AG04450 (cell line): ENCODE measurements at regions of chr21 and their contacts with region 1.

Region 1: GRCh38 chr21:14864211-14865021 is 200.4 kb downstream of the NRIP1 start:
- DNase-seq: peak; percentile 42
- H3K4me3 ChIP-seq: no peak overlapping the region
- H3K27ac ChIP-seq: no peak overlapping the region
- H3K27me3 ChIP-seq: no peaks in the 10 kb centered on the region
- CTCF ChIP-seq: peak; percentile 76

Region 2: DNA sequence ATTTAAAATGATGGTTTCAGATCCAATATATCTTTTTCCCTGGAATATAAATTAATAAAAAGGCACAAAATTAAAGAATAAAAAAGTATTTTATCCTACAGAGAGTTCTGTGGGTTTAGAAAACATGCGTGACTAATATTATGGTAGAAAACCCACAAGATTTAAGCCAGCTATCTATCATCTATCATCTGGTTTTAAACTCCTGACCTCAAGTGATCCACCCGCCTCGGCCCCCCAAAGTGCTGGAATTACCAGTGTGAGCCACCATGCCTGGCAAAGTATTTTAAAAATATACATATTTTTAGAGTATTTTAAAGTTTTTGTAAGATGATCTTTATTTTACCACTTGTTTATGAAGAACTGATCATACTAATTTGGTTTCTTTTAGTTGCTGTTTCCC is 120.9 kb after region 1 on chr21:
- CTCF ChIA-PET with region 1: no interaction called
- POLR2A ChIA-PET with region 1: no interaction called
- DNase-seq: no peak
- H3K4me3 ChIP-seq: no peak overlapping the region
- H3K27ac ChIP-seq: no peak overlapping the region
- H3K27me3 ChIP-seq: no peaks in the 10 kb centered on the region
- CTCF ChIP-seq: no peak

Region 3: DNA sequence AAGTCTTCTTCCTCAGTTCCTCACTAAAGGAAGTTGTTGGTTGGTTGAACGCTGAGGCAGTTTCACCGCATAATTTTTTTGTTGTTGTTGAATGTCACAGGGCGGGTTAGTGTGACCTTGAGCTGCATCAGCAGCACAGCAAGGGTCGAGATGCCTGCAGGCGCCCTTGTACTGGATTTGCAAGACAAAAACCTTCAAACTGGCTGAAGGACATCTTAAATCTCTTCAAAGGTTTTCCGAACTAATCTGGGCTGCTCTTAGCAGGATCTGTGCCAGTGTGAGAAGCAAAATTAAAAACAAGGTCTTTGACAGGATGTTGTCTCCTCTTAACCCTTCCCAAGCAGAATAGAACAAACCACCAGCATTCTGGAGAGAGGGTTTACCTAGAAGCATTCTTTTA is 141.0 kb after region 1 on chr21:
- CTCF ChIA-PET with region 1: interaction called, 13 read pairs
- POLR2A ChIA-PET with region 1: no interaction called
- DNase-seq: no peak
- H3K4me3 ChIP-seq: peak overlapping the region; percentile 41
- H3K27ac ChIP-seq: peak overlapping the region; percentile 89
- H3K27me3 ChIP-seq: no peaks in the 10 kb centered on the region
- CTCF ChIP-seq: no peak